HepG2 (cell line): ENCODE measurements at regions of chr13 and their contacts with region 1.

Region 1: DNA sequence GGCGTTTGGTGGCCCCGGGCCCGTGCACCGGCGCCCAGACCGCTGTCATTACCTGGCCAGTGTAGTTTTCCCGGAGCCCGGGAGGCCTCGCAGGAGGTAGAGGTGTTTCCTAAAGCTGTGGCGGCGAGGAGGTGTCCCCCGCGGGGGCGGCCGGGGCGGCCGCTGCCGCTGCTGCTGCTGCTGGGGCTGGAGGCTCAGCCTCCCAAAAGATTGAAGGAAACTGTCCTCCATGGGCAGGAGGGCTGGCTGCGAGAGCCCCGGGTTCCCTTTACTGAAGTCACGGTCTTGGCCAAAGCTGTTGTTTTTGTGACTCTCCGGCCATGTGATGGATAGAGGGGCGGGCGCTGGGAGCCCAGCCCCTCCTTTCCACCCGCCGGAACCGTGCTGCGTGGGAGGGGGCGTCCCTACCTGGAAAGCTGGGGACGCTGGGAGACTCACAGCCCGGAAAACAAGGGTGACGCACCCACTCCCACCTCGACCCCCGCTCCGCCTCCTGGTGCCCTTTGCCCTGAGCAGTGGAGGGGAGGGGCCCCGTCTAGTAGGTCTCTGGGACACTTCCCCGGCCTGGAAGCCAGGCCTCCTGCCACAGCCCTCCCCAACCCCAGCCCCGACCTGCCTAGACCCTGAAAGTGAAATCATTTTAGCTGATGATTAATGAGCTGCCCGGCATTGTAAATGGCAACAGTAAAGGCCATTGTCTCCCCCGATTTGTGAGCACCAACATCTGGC is at the start of gene N4BP2L1:
- DNase-seq: peak; percentile 96
- ATAC-seq: peak; percentile 94
- H3K4me3 ChIP-seq: peak within 1 kb of the TSS; percentile 76 to 90 (median 85)
- H3K27ac ChIP-seq: peak within 1 kb of the TSS; percentile 94
- H3K4me1 ChIP-seq: peaks cover 64% of the 10 kb centered on the region
- H3K27me3 ChIP-seq: no peaks in the 10 kb centered on the region; a peak in 1 of 5 replicates
- CTCF ChIP-seq: peak; percentile 27
- EP300 ChIP-seq: 0 out of 4 replicates have a peak, but pooled peaks of 1 of the 2 experiments have one; percentile 16
- POLR2A ChIP-seq: peak; percentile 69 to 74
- RAD21 ChIP-seq: no peak
- total RNA-seq, gene N4BP2L1: 11.8 and 13.2 TPM in 2 replicates

Region 2: DNA sequence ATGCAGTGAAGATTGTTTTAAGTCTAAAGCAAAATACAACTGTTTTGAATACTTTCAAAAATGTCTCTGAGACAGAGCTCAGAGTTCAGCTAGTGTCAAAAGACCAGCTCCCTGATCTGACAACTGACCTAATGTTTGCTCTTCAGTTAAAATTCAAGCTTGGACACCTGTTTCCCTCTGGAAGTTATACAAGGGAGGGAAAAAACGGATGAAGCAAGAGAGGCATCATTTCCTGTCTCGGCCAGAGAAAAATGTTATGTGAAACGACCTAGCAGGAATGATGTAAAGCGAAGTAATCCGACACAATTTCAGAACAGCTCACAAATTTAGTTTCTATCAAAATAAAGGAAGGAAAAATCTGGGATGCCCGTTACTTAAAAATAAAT is 172.3 kb before region 1 on chr13:
- CTCF ChIA-PET with region 1: no interaction called
- POLR2A ChIA-PET with region 1: interaction called, 19 read pairs
- in situ Hi-C with region 1: no loop called
- intact Hi-C with region 1: no loop called
- DNase-seq: peak; percentile 97
- ATAC-seq: peak; percentile 96
- H3K4me3 ChIP-seq: peak overlapping the region; percentile 5 to 59 (median 24); a peak in 3 of 6 replicates
- H3K27ac ChIP-seq: peak overlapping the region; percentile 92
- H3K4me1 ChIP-seq: peaks cover 80% of the 10 kb centered on the region
- H3K27me3 ChIP-seq: no peaks in the 10 kb centered on the region
- CTCF ChIP-seq: no peak
- EP300 ChIP-seq: peak; percentile 74 to 94; a peak in 3 of 4 replicates
- POLR2A ChIP-seq: peak in 1 of 2 experiments; percentile 30; a peak in 1 of 4 replicates
- RAD21 ChIP-seq: no peak

Region 3: GRCh38 chr13:32315238-32316027 is 112.6 kb before region 1 on chr13 and contains the starts of genes BRCA2 and ZAR1L:
- CTCF ChIA-PET with region 1: no interaction called
- POLR2A ChIA-PET with region 1: interaction called, 10 read pairs
- in situ Hi-C with region 1: no loop called
- intact Hi-C with region 1: no loop called
- DNase-seq: peak; percentile 79
- ATAC-seq: peak; percentile 99
- H3K4me3 ChIP-seq: peak within 1 kb of the TSS; percentile 66 to 83 (median 72)
- H3K27ac ChIP-seq: peak within 1 kb of the TSS; percentile 75
- H3K4me1 ChIP-seq: peaks cover 32% of the 10 kb centered on the region
- H3K27me3 ChIP-seq: no peaks in the 10 kb centered on the region; a peak in 1 of 5 replicates
- CTCF ChIP-seq: no peak; the same call in 1 of the 2 replicates
- EP300 ChIP-seq: no peak
- POLR2A ChIP-seq: peak; percentile 83 to 90
- RAD21 ChIP-seq: 0 out of 2 replicates have a peak, but pooled peaks have one; percentile 4
- total RNA-seq, gene BRCA2: 24.6 and 28.3 TPM in 2 replicates
- total RNA-seq, gene ZAR1L: 0.09 TPM in 1 of 2 replicates, not detected in the other

Region 4: DNA sequence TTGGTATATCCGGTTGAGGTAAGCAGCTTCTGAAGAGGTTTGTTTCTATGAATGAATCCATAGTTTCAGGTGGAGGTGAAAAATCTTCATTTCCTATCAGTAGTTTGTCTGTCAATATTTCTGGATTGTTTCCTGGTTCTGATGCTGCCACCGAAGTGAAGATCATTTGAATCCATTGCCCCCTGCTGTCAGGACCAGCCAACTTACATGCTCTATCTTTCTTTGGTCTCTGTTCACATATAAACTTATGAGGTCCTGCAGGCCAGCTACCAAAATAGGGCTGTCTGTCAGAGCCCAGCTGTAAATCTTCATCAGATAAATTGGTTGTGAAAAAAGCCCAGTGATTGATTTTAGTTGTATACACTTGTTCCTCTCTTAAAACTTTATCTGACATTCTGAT is 15.1 kb after region 1 on chr13:
- CTCF ChIA-PET with region 1: no interaction called
- POLR2A ChIA-PET with region 1: interaction called, 11 read pairs
- in situ Hi-C with region 1: no loop called
- intact Hi-C with region 1: loop called (anchors 2 kb)
- DNase-seq: peak; percentile 69
- ATAC-seq: peak; percentile 71
- H3K4me3 ChIP-seq: no peak overlapping the region
- H3K27ac ChIP-seq: no peak overlapping the region
- H3K4me1 ChIP-seq: peaks cover 56% of the 10 kb centered on the region
- H3K27me3 ChIP-seq: no peaks in the 10 kb centered on the region
- CTCF ChIP-seq: peak; percentile 70
- EP300 ChIP-seq: no peak
- POLR2A ChIP-seq: no peak
- RAD21 ChIP-seq: peak; percentile 62; the same call in 1 of the 2 replicates

Region 5: DNA sequence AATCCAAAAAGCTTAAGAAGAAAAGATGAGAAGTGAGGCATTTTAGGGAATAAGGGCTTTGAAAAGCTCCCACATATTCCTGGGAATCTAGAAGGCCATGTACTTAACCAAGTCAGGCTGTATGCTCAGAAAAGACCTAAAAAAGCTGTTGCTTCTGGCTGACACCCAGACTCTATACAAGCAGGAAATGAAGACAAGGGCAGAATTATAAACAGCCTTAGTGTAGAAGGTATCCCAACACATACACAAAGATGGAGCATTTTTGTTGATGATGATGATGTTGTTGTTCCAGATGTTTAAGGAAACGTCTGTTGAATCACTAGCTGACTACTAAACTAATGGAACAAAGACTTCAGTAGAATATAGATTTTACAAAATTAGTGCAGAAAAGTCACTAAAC is 26.0 kb after region 1 on chr13:
- CTCF ChIA-PET with region 1: no interaction called
- POLR2A ChIA-PET with region 1: interaction called, 11 read pairs
- in situ Hi-C with region 1: no loop called
- intact Hi-C with region 1: no loop called
- DNase-seq: no peak
- ATAC-seq: no peak
- H3K4me3 ChIP-seq: no peak overlapping the region
- H3K27ac ChIP-seq: peak overlapping the region; percentile 76
- H3K4me1 ChIP-seq: peaks cover 44% of the 10 kb centered on the region
- H3K27me3 ChIP-seq: no peaks in the 10 kb centered on the region
- CTCF ChIP-seq: no peak
- EP300 ChIP-seq: no peak
- POLR2A ChIP-seq: no peak
- RAD21 ChIP-seq: no peak

Region 6: GRCh38 chr13:32538621-32539246 is 110.7 kb after region 1 on chr13 and contains the start of gene N4BP2L2:
- CTCF ChIA-PET with region 1: no interaction called
- POLR2A ChIA-PET with region 1: interaction called, 11 read pairs
- in situ Hi-C with region 1: no loop called
- intact Hi-C with region 1: loop called (anchors 10 kb)
- DNase-seq: peak; percentile 96
- ATAC-seq: peak; percentile 99
- H3K4me3 ChIP-seq: peak within 1 kb of the TSS; percentile 80 to 85 (median 84)
- H3K27ac ChIP-seq: peak within 1 kb of the TSS; percentile 94
- H3K4me1 ChIP-seq: peaks cover 36% of the 10 kb centered on the region
- H3K27me3 ChIP-seq: no peaks in the 10 kb centered on the region; a peak in 1 of 5 replicates
- CTCF ChIP-seq: peak; percentile 78
- EP300 ChIP-seq: 0 out of 4 replicates have a peak, but pooled peaks of 1 of the 2 experiments have one; percentile 35
- POLR2A ChIP-seq: peak; percentile 77 to 79
- RAD21 ChIP-seq: peak; percentile 12; the same call in 1 of the 2 replicates
- total RNA-seq, gene N4BP2L2: 81.2 and 82.6 TPM in 2 replicates